Activated naive CD4-positive, alpha-beta T cell treated with anti-CD3 and anti-CD28 coated beads for 36 hours (primary cell): ENCODE measurements at regions of chr11 and their contacts with region 1.

Region 1: GRCh38 chr11:44190868-44191200 is 95.4 kb downstream of the EXT2 start:
- DNase-seq: no peak
- H3K4me3 Mint-ChIP-seq: no peak overlapping the region
- H3K27ac Mint-ChIP-seq: no peak overlapping the region
- H3K4me1 Mint-ChIP-seq: peaks cover 32% of the 10 kb centered on the region
- H3K27me3 Mint-ChIP-seq: no peaks in the 10 kb centered on the region

Region 2: GRCh38 chr11:43905813-43906241 is 285.0 kb before region 1 on chr11:
- CTCF ChIA-PET with region 1: no interaction called
- intact Hi-C with region 1: no loop called
- DNase-seq: no peak
- H3K4me3 Mint-ChIP-seq: no peak overlapping the region
- H3K27ac Mint-ChIP-seq: no peak overlapping the region
- H3K4me1 Mint-ChIP-seq: peaks cover 10% of the 10 kb centered on the region
- H3K27me3 Mint-ChIP-seq: no peaks in the 10 kb centered on the region

Region 3: DNA sequence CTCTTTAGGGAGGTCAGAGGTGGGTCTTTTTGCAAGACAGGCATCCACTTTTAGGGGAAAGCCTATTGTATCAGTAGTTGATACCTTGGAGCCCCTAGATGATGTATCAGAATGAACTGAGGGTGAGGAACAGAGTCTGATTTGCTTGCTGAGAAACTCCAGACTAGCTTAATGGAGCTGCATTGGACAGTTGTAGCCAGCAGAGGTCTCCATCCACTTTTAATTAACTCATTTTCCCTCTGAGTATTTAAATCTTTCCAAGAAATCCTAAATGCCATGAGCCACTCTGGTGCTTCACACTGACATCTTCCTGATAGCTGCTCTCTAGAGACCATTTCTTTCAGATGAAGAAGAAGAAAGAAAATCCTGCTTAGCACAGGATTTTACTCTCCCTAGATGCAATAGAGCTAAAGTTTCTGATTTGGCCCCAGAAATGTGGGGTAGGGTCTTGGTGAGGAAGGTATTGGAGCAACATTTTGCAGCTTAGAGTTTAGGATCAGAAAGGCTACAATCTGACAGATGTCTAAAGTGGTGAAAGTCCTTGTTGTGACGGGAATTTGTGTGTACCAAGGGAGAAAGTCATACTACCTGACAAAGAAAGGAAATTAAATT is 57.4 kb before region 1 on chr11:
- CTCF ChIA-PET with region 1: no interaction called
- intact Hi-C with region 1: loop called (anchors 5 kb)
- DNase-seq: no peak
- H3K4me3 Mint-ChIP-seq: no peak overlapping the region
- H3K27ac Mint-ChIP-seq: no peak overlapping the region
- H3K4me1 Mint-ChIP-seq: no peaks in the 10 kb centered on the region
- H3K27me3 Mint-ChIP-seq: no peaks in the 10 kb centered on the region

Region 4: GRCh38 chr11:44326615-44327475 is 136.0 kb after region 1 on chr11:
- CTCF ChIA-PET with region 1: no interaction called
- intact Hi-C with region 1: no loop called
- DNase-seq: no peak
- H3K4me3 Mint-ChIP-seq: no peak overlapping the region
- H3K27ac Mint-ChIP-seq: no peak overlapping the region
- H3K4me1 Mint-ChIP-seq: no peaks in the 10 kb centered on the region
- H3K27me3 Mint-ChIP-seq: peaks cover 62% of the 10 kb centered on the region